ENCODE measurements at regions of chr19 and their contacts with region 1.

Region 1: GRCh38 chr19:1189419-1189818 is 15.4 kb upstream of the SBNO2 start:
- DNase-seq: no peak

Region 2: DNA sequence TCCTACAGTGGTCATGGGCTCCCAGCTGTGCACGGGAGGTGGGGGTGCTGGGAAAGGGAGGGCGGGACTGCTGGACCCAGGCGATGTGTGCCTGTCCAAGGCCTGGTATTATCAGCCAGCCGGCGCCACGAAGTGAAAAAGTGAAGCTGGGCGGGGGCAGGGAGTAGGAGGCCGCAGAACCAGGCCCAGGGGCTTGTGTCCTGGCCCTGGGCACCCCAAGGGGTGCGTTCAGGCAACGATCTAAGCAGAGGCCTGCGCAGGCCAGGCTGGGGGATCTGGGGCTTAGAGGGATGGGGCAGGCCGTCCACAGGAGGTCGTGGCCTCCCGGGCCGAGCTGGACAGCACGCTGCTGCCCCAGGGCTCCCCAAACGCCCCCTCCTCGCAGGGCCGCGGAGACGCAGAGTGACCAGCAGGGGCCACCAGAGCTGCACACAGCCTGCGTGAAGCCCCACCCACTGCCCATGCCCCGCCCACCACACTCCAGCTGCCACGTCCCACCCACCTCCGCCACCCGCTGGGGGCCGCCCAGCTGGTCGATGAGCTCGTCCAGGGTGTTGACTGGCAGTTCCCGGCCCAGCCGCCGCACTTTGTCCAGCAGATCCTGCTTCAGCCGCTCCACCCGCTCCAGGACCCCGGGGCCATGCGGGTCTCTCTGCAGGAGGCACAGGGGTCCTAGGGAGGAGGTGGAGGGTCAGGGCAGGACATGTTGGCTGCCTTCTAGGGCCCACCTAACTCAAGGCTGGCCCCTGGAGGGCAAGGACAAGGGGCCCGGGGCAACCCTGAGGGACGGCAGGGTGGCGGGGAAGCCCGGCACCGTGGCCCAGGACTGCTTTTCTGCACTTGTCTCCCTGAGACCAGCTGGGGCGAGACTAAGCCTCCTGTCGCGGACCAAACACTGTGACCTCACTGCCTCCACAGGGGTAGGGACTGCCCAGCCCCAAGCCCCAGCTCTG is 76.1 kb before region 1 on chr19:
- intact Hi-C with region 1: loop called (anchors 5 kb)
- DNase-seq: peak; percentile 95